ENCODE measurements at regions of chr7 and their contacts with region 1.

Region 1: GRCh38 chr7:126803060-126803665 is 449.6 kb downstream of the GRM8 start:
- DNase-seq: peak; percentile 45
- ATAC-seq: no peak
- H3K4me3 ChIP-seq: no peak overlapping the region
- H3K4me3 Mint-ChIP-seq: no peak overlapping the region
- H3K27ac ChIP-seq: no peak overlapping the region
- H3K27ac Mint-ChIP-seq: no peak overlapping the region
- H3K4me1 ChIP-seq: no peaks in the 10 kb centered on the region
- H3K4me1 Mint-ChIP-seq: no peaks in the 10 kb centered on the region
- H3K27me3 ChIP-seq: no peaks in the 10 kb centered on the region
- H3K27me3 Mint-ChIP-seq: peaks cover 4% of the 10 kb centered on the region
- CTCF ChIP-seq: peak; percentile 71

Region 2: DNA sequence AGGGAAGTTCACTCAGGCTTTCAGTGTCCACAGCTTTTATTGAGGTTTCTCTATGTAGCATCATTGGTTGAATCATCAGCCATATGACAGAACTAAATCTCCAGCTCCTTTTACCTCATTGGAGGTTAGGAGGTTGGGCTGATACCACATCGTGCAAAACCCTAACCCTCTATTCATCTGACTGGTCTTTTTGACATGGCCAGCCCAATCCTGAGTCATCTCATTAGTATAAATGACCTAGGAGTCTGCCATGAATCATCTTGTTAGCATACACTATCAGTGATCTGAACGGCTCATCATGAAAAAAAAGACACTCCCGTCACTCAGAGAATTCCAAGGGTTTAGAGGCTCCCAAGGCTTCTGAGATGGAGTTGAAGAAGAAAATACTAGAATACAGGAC is 1203.8 kb before region 1 on chr7:
- CTCF ChIA-PET with region 1: no interaction called
- POLR2A ChIA-PET with region 1: no interaction called
- intact Hi-C with region 1: no loop called
- DNase-seq: no peak
- ATAC-seq: no peak
- H3K4me3 ChIP-seq: no peak overlapping the region
- H3K4me3 Mint-ChIP-seq: no peak overlapping the region
- H3K27ac ChIP-seq: no peak overlapping the region
- H3K27ac Mint-ChIP-seq: no peak overlapping the region
- H3K4me1 ChIP-seq: no peaks in the 10 kb centered on the region
- H3K4me1 Mint-ChIP-seq: no peaks in the 10 kb centered on the region
- H3K27me3 ChIP-seq: no peaks in the 10 kb centered on the region
- H3K27me3 Mint-ChIP-seq: no peaks in the 10 kb centered on the region
- CTCF ChIP-seq: no peak

Region 3: DNA sequence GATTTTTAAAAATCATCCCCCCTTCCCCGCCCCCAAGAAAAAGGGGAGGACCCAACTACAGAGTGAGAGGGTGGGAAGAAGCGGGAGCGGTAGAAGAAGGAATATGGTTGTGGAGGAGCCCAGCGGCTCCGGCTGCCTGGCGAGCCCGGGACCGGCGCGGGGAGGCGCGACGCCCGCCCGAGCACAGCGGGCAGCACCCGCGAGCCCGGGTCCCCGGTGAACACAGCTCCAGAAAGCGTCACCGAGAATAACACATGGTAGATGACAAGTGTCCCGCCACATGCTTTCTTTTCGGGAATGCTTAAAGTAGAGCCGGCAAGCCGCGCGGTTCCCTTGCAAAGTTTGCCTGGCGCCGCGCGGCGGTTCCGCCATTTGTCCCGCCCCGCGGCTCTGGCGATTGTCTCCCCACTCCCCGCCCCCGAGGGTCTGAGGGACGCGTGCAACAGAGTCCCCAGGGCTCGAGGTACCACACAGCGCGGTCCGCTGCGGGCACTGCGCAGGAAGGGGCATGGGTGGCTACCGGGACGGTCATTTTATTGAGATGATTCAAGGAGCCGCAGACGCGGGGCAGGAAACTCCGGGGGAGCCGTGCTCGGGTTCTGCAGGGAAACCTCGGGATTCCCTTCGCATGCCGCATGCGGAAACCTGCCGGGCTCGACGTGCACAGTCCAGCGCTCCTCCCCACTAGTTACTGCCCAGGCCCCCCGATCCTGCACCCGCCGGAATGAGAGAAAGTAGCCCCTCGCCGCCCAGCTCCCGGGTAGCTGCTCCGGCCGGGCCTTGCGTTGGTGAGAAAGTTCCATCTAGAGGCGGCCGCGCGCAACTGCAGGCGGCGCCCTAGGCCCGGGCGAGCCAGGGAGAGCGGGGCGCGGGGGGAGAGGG is 450.4 kb after region 1 on chr7:
- CTCF ChIA-PET with region 1: no interaction called
- POLR2A ChIA-PET with region 1: no interaction called
- intact Hi-C with region 1: loop called (anchors 10 kb)
- DNase-seq: peak; percentile 73
- ATAC-seq: peak; percentile 79
- H3K4me3 ChIP-seq: peak overlapping the region; percentile 58 to 94 (median 74)
- H3K4me3 Mint-ChIP-seq: peak overlapping the region; percentile 89
- H3K27ac ChIP-seq: no peak overlapping the region
- H3K27ac Mint-ChIP-seq: no peak overlapping the region
- H3K4me1 ChIP-seq: peaks cover 21 to 24% of the 10 kb centered on the region in 2 donors
- H3K4me1 Mint-ChIP-seq: peaks cover 20% of the 10 kb centered on the region
- H3K27me3 ChIP-seq: peaks cover 2 to 82% (median 52%) of the 10 kb centered on the region in 4 experiments
- H3K27me3 Mint-ChIP-seq: peaks cover 70% of the 10 kb centered on the region
- CTCF ChIP-seq: peak; percentile 87